ENCODE measurements at regions of chr6 and their contacts with region 1.

Region 1: DNA sequence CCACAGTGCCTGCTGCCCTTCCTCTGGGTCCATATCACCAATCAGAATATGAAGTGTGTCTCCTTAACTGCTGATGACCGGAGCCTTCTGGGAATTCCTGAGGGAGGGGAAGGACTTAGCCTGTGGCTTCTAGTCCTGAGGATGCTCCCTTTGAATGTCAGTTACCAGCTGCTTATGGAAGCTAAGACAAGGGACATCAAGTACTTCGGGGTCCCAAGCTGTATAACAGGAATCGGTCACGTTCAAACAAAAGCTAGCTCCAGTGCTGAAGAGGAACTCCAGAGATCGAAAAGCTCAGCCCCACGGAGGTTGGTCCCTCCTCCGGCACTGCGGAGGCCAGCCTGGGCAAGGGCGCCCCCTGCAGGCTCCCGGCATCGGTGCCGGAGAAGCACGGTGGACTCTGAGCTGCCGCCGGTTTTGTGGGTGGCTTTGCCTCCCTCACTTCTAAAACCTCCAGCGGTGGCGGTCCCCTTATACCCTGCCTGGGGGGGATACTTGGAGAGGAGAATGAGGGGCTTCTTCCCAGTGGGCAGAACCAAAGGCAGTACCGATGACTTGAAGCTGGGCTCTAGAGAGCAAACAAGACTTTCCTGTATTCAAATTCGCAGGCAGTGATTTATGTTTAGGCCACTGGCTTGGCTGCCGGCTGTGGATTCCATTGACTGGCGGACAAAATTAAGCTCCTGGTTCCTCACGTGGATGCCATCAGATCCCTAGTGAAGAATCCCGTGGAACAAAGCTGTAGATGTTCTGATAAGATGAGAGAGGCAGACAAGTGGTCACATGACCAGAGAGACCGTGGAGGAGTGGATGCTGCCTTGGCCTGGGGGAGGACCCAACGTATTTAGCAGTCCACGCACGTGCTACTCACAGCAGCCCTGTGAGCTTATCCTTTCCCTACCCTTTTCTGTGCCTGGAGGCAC is 16.2 kb upstream of the UBR2 start:
- DNase-seq: peak; percentile 56
- H3K4me3 ChIP-seq: peak overlapping the region; percentile 51 to 57 (median 54)
- H3K27ac ChIP-seq: no peak overlapping the region
- H3K4me1 ChIP-seq: peaks cover 6% of the 10 kb centered on the region
- H3K27me3 ChIP-seq: no peaks in the 10 kb centered on the region
- CTCF ChIP-seq: peak; percentile 86 to 99

Region 2: DNA sequence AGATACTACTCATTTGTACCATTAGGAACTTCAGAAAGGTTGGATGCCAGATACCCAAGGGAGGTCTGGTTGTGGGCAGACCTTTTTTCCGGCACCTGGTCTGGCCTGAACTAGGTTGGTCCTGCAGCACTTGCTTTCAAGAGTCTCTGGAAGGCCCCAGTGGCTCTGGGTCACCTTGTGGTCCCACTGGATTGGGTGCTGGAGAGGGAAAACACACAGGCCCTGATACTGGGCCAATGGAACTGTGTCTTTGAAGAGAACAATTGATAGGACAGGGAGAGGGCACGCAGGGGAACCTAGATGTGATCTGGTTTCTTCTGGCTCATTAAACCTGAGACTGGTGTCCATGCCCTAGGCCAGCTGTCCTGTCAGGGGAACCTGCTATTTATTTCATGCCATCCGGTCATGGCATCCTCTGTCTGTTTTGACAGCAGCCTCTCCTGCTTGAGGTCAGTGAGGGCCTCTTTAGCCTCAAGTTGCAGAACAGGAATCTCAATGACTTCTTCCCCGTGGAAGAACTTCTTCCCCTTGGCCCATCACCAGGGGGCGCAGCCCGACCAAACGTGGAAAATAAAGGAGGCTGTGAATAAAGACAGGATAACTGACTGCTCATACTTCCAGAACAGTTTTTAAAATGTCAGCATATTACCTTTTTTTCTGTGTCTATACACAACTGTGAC is 472.4 kb before region 1 on chr6:
- CTCF ChIA-PET with region 1: no interaction called
- dilution Hi-C with region 1: no loop called
- in situ Hi-C with region 1: loop called in 1 of 2 experiments (anchors 25 kb)
- intact Hi-C with region 1: loop called (anchors 1 kb)
- DNase-seq: peak; percentile 67
- H3K4me3 ChIP-seq: no peak overlapping the region
- H3K27ac ChIP-seq: no peak overlapping the region
- H3K4me1 ChIP-seq: no peaks in the 10 kb centered on the region
- H3K27me3 ChIP-seq: no peaks in the 10 kb centered on the region
- CTCF ChIP-seq: peak; percentile 91 to 94

Region 3: GRCh38 chr6:42195415-42195814 is 352.3 kb before region 1 on chr6:
- CTCF ChIA-PET with region 1: interaction called, 13 read pairs
- dilution Hi-C with region 1: no loop called
- in situ Hi-C with region 1: no loop called
- intact Hi-C with region 1: no loop called
- DNase-seq: no peak
- H3K4me3 ChIP-seq: no peak overlapping the region
- H3K27ac ChIP-seq: no peak overlapping the region
- H3K4me1 ChIP-seq: peaks cover 32% of the 10 kb centered on the region
- H3K27me3 ChIP-seq: no peaks in the 10 kb centered on the region
- CTCF ChIP-seq: no peak

Region 4: DNA sequence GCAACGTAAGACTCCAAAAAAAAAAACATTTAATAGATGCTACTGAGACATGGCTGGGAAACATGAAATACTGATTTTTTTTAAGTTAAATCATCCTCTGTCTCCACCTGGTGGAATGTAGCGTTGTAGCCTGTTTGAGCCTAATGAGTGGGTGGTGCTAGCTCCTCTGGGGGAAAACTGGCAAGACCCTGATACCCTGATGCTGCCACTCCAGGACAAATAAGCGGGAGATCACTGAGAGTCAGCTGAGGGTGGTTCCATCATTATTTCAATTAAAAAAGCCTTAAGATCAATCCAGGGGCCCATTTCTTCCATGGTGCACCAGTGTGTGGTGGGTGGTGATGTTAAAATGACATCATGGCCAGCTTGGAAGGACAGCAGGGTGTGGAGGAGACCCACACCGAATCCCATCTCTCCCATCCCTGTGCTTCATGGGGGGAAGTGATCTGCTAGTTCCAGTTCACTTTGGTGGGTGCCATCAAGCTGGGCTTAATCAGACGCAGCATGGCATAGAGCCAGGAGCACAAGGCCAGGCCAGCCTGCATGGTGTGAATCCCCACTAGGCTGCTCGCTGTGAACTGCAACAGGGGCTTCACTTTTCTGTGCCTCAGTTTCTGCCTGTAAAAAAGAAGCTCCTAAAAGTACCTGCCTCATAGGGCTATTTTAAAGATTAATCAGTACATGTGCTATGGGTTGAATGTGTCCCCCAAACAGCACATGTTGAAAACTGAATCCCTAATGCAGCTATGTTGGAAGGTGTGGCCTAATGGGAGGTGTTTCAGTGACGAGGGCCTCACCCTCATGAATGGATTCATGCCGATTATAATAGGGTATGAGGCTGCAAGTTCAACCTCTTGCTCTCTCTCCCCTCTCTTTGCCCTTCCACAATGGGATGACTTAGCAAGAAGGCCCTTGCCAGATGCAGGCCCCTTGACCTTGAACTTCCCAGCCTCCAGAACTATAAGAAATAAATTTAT is 317.0 kb before region 1 on chr6:
- CTCF ChIA-PET with region 1: interaction called, 11 read pairs
- dilution Hi-C with region 1: no loop called
- in situ Hi-C with region 1: loop called in 1 of 2 experiments (anchors 25 kb)
- intact Hi-C with region 1: no loop called
- DNase-seq: no peak
- H3K4me3 ChIP-seq: no peak overlapping the region
- H3K27ac ChIP-seq: peak overlapping the region; percentile 45
- H3K4me1 ChIP-seq: peaks cover 38% of the 10 kb centered on the region
- H3K27me3 ChIP-seq: no peaks in the 10 kb centered on the region
- CTCF ChIP-seq: peak; percentile 68 to 69

Region 5: DNA sequence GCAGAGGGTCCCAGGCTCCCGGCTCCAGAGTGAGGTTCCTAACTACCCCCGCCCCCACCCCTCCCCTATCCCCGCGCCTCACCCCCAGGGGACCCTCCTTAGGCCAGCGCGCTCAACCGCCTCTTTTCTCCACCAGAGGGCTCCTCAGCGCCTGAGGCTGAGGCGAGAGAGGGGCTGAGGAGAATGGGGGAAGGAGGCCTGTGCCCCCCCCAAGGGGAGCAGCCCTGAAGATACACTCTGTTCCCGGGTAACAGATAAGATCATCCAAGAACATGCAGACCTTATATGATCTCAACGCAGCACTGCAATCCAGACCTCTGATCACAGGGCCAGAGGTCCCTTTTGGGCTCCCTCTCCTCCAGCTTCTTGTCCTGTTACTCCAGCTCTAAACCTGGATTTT is 286.7 kb before region 1 on chr6:
- CTCF ChIA-PET with region 1: interaction called, 13 read pairs
- dilution Hi-C with region 1: no loop called
- in situ Hi-C with region 1: no loop called
- intact Hi-C with region 1: loop called (anchors 2 kb)
- DNase-seq: no peak
- H3K4me3 ChIP-seq: no peak overlapping the region
- H3K27ac ChIP-seq: no peak overlapping the region
- H3K4me1 ChIP-seq: no peaks in the 10 kb centered on the region
- H3K27me3 ChIP-seq: no peaks in the 10 kb centered on the region
- CTCF ChIP-seq: peak in 1 of 2 donors; percentile 58